Sigmoid colon (tissue), 7 donors: ENCODE measurements at regions of chr1 and their contacts with region 1.

Region 1: GRCh38 chr1:7783826-7784491 is at the start of gene PER3:
- DNase-seq: peak; percentile 99
- H3K4me3 ChIP-seq: peak within 1 kb of the TSS; percentile 57 to 91 (median 70)
- H3K27ac ChIP-seq: peak within 1 kb of the TSS; percentile 94 to 99 (median 96)
- H3K4me1 ChIP-seq: peaks cover 0 to 55% (median 49%) of the 10 kb centered on the region in 4 donors
- H3K27me3 ChIP-seq: no peaks in the 10 kb centered on the region
- CTCF ChIP-seq: no peak
- EP300 ChIP-seq: peak in 1 of 4 donors; percentile 53
- POLR2A ChIP-seq: peak in 1 of 2 donors; percentile 18
- total RNA-seq, gene PER3: 36.1 to 57.1 (median 44.9) TPM

Region 2: GRCh38 chr1:7770997-7771822 is 12.7 kb before region 1 on chr1 and contains the start of gene VAMP3:
- intact Hi-C with region 1: loop called (anchors 1 kb)
- DNase-seq: peak; percentile 94
- H3K4me3 ChIP-seq: peak within 1 kb of the TSS; percentile 76 to 98 (median 93)
- H3K27ac ChIP-seq: peak within 1 kb of the TSS; percentile 87 to 94 (median 94)
- H3K4me1 ChIP-seq: peaks cover 0 to 20% (median 14%) of the 10 kb centered on the region in 4 donors
- H3K27me3 ChIP-seq: no peaks in the 10 kb centered on the region
- CTCF ChIP-seq: no peak
- EP300 ChIP-seq: no peak
- POLR2A ChIP-seq: peak; percentile 26 to 32
- total RNA-seq, gene VAMP3: 83.8 to 2,991 (median 182) TPM